ENCODE measurements at regions of chr20 and their contacts with region 1.

Region 1: DNA sequence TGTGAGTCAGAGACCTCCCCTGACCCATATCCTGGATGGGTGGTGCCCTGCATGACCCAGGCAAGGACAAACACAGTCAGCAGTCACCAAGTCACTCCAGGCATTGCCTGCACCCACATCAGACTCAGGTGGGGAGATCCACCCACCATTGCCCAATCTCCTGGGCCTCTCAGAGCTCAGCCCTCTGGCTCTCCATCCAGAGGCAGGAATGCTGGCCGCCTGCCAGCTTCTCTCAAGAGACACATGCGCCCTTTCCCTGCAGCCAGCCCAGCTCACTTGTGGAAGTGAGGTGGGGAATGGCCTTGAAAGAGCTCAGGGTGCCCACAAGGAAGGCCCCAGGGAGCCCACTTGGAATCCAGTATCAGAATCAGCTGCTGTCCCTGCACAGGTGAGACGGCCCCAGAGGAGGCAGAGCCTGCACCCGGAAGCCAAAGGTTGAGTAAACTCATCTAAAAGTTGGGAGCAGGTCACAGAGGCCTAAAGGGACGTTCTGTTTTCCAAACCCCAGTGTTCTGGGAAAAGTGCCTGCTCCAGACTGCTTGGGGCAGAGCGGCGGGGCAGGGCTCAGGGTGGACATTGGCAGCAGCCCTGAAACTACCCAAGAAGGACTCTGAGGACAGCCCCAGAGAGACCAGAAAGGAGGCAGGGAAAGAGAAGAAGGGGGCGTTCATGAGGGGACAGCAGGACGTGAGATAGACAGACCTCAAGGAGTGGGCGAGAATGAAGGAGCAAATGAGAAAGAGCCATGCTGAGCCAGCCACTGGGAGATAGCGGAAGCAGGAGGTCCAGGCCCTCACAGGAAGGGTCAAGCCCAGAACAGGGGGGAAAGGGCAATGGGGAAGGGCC is 129.7 kb downstream of the PREX1 start:
- DNase-seq: no peak
- H3K4me3 ChIP-seq: no peak overlapping the region
- H3K27ac ChIP-seq: no peak overlapping the region
- H3K4me1 ChIP-seq: no peaks in the 10 kb centered on the region
- H3K27me3 ChIP-seq: no peaks in the 10 kb centered on the region
- CTCF ChIP-seq: no peak
- EP300 ChIP-seq: no peak
- POLR2A ChIP-seq: no peak
- RAD21 ChIP-seq: no peak

Region 2: DNA sequence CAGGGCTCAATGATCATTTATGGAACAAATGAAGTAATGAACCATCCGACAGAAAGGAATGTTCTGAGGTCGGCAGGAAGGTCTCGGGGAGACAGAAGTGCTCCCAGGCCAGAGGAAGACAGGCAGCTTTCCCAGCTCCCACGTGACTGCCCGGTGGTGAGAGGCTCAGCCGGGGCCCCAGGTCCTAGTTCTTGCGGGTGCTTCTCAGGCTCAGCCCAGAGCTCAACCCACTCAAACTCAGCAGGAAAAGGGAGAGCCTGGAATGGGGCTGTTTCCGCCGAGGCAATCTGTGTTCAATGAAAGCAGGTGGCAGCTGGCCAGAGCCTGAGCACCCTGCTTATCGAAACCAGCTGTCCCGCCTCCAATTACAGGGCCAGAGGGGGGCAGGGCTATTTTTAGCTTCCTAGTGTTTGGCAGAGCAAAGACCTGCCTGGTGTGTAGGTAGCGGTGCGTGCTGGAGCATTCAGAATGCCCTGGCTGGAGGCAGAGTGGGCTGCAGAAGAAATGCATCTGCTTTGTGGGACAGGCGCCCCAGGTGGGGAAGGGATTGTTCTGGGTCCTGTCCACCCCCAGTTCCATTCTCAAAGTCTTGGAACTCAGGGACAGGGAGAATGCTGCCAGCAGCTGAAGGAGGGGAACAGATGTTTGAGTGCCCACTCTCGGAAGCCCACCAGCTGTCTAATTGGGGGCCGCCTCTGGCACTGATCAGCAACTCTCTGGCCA is 15.4 kb before region 1 on chr20:
- CTCF ChIA-PET with region 1: interaction called, 15 read pairs
- POLR2A ChIA-PET with region 1: interaction called, 3 read pairs
- DNase-seq: peak in 1 of 2 experiments; percentile 64
- H3K4me3 ChIP-seq: peak overlapping the region in 3 of 4 experiments; percentile 7 to 18 (median 12); a peak in 3 of 8 replicates
- H3K27ac ChIP-seq: peak overlapping the region; percentile 75
- H3K4me1 ChIP-seq: peaks cover 10 to 31% (median 16%) of the 10 kb centered on the region in 4 experiments
- H3K27me3 ChIP-seq: no peaks in the 10 kb centered on the region
- CTCF ChIP-seq: no peak
- EP300 ChIP-seq: peak in 1 of 2 experiments; percentile 85; a peak in 1 of 3 replicates
- POLR2A ChIP-seq: peak in 1 of 2 experiments; percentile 38; a peak in 1 of 3 replicates
- RAD21 ChIP-seq: peak in 1 of 2 experiments; percentile 2; a peak in 2 of 4 replicates

Region 3: DNA sequence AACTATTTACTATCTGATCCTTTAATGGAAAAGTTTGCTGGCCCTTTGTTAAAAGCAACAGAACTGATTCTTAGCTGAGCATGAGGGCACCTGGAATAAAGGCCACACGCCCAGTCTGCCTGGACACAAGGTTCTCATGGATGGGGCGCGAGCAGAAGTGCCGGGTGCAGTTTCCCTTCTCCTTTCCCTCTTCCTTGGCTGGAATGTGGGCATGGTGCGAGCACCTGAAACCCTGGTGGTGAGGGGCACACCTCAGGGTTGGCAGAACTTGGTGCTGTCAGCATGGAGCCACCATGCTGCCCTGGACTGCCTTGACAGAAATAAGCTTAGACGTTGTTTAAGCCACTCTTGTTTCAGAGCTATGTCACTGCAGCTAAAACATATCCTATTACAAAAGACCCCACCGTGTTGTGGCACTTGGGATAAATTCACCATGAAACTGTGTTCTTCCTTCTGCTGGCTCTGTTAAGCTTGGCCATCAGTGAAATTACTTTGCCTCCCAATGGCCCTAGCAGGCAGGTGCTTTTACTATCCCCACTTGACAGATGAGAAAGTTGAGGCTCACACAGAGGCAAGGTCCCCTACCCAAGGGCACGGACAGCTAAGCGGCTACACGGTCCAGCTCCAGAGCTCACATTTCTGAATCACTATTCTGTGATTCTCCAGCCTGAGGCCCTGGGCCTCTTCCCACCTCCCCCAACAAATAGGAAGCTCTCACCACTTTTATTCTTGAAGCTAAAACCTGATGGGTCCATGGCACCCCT is 13.8 kb after region 1 on chr20:
- CTCF ChIA-PET with region 1: interaction called, 28 read pairs
- POLR2A ChIA-PET with region 1: no interaction called
- DNase-seq: no peak
- H3K4me3 ChIP-seq: no peak overlapping the region
- H3K27ac ChIP-seq: no peak overlapping the region
- H3K4me1 ChIP-seq: peaks cover 0 to 3% (median 0%) of the 10 kb centered on the region in 4 experiments; a peak in 1 of 7 replicates
- H3K27me3 ChIP-seq: no peaks in the 10 kb centered on the region
- CTCF ChIP-seq: no peak
- EP300 ChIP-seq: no peak
- POLR2A ChIP-seq: no peak
- RAD21 ChIP-seq: no peak

Region 4: GRCh38 chr20:48725226-48725991 is 27.3 kb after region 1 on chr20:
- CTCF ChIA-PET with region 1: interaction called, 11 read pairs
- POLR2A ChIA-PET with region 1: no interaction called
- DNase-seq: no peak
- H3K4me3 ChIP-seq: no peak overlapping the region
- H3K27ac ChIP-seq: no peak overlapping the region
- H3K4me1 ChIP-seq: peaks cover 3 to 9% (median 5%) of the 10 kb centered on the region in 4 experiments; a peak in 5 of 7 replicates
- H3K27me3 ChIP-seq: no peaks in the 10 kb centered on the region; a peak in 1 of 7 replicates
- CTCF ChIP-seq: no peak
- EP300 ChIP-seq: no peak
- POLR2A ChIP-seq: no peak
- RAD21 ChIP-seq: no peak

Measured in H1 (cell line).